Common myeloid progenitor, CD34-positive (primary cell): ENCODE measurements at regions of chr19 and their contacts with region 1.

Region 1: DNA sequence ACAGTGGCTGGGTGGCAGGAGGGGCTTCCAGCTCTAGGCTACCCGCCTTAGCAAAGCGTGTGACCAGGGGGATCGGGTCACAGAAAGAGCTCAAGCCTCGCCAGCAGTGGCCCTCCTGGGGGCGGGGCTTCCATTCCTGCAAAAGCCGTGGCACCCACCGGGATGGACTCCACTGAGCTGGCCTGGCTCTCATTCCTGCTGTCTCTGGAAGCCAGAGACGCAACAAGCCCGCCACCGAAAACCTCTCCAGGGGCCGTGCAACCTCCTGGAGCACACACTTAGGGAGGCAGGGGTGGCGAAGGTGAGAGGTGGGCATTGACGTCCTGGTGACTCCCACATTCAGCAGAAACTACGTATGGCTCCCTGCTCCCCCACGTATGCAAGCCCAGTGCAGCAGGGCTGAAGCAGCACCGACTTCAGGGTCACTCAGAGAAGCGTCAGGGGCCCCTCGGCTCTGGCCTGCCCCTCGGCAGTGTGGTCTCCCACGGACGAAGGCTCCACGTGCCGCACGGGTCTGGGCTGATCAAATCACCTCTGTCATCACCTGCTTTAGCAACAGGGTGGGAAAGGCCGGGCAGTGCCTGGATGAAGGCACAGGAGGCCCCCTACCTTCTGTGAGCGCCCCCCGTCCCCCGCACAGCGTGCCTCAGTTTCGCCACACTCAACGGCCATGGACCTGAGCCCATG is 3.1 kb downstream of the C19orf25 start:
- DNase-seq: no peak
- H3K4me3 ChIP-seq: no peak overlapping the region
- H3K27ac ChIP-seq: no peak overlapping the region
- H3K4me1 ChIP-seq: peaks cover 0 to 26% (median 19%) of the 10 kb centered on the region in 4 experiments
- H3K27me3 ChIP-seq: peaks cover 0 to 35% (median 14%) of the 10 kb centered on the region in 5 experiments

Region 2: DNA sequence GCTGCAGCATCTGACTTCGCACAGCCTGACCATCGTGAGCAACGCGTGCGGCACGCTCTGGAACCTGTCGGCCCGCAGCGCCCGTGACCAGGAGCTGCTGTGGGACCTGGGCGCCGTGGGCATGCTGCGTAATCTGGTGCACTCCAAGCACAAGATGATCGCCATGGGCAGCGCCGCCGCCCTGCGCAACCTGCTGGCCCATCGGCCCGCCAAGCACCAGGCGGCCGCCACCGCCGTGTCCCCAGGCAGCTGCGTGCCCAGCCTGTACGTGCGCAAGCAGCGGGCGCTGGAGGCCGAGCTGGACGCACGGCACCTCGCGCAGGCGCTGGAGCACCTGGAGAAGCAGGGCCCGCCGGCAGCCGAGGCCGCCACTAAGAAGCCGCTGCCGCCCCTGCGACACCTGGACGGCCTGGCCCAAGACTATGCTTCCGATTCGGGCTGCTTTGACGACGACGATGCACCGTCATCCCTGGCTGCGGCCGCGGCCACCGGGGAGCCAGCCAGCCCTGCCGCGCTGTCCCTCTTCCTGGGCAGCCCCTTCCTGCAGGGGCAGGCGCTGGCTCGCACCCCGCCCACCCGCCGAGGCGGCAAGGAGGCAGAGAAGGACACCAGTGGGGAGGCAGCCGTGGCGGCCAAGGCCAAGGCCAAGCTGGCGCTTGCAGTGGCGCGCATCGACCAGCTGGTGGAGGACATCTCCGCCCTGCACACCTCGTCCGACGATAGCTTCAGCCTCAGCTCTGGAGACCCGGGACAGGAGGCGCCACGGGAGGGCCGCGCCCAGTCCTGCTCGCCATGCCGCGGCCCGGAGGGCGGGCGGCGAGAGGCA is 10.5 kb before region 1 on chr19:
- CTCF ChIA-PET with region 1: interaction called, 12 read pairs
- POLR2A ChIA-PET with region 1: no interaction called
- DNase-seq: peak; percentile 45 to 72 (median 59)
- H3K4me3 ChIP-seq: peak overlapping the region in 2 of 7 experiments; percentile 11 to 50
- H3K27ac ChIP-seq: no peak overlapping the region
- H3K4me1 ChIP-seq: peaks cover 0 to 49% (median 34%) of the 10 kb centered on the region in 4 experiments
- H3K27me3 ChIP-seq: peaks cover 0 to 59% (median 21%) of the 10 kb centered on the region in 5 experiments

Region 3: GRCh38 chr19:1526979-1527649 is 51.2 kb after region 1 on chr19:
- CTCF ChIA-PET with region 1: no interaction called
- POLR2A ChIA-PET with region 1: no interaction called
- DNase-seq: no peak
- H3K4me3 ChIP-seq: no peak overlapping the region
- H3K27ac ChIP-seq: no peak overlapping the region
- H3K4me1 ChIP-seq: peaks cover 0 to 4% (median 0%) of the 10 kb centered on the region in 4 experiments
- H3K27me3 ChIP-seq: peaks cover 4 to 58% (median 19%) of the 10 kb centered on the region in 5 experiments